CD4-positive, alpha-beta memory T cell (primary cell): ENCODE measurements at regions of chr2 and their contacts with region 1.

Region 1: DNA sequence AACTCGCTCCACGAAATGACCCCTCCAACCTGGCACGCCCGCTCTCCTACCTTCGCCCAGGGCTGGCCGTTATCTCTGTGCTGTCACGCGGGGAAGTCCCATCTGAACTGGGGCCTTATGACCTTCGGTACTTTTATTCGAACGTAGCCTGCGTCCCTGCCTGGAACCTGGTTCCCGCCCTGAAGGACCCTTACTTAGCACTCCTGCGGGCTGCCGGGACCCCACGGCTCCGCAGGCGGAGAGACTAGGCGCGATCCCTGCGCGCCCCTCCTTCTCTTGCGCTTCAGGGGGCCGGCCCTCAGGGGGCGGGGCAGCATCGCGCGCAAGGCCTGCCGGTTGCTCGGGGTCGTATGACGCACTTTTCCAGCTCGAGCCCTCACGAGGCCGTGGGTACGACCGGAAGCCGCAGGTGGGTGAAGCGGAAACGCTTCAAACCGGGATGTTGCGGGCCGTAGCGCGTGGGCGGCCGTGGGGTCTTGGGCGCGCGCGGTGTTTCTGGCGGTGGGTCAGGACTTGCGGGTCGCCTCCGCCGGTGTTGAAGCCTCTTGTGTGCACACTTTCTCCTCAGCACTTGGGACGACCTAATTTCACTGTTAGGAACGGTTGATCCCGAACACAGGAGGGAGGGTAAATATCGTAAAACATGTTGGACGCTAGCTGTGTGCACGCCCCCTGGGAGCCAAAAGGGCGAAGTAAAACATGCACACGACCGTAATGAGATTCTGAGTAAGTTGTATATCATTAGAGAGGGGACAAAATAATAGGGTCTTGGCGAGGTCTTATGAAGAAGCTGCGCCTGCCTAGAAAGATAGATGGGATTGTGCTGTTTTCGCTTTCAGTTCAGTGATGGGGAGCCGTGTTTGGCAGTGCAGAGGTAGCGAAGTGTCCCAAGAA is at the starts of genes LIPT1 and TSGA10:
- DNase-seq: peak; percentile 90 to 92 (median 91)
- H3K4me3 ChIP-seq: peak within 1 kb of the TSS; percentile 78 to 89
- H3K4me3 Mint-ChIP-seq: peak within 1 kb of the TSS in 3 of 8 donors; percentile 91 to 99 (median 96)
- H3K27ac ChIP-seq: peak within 1 kb of the TSS; percentile 97
- H3K27ac Mint-ChIP-seq: peak within 1 kb of the TSS in 1 of 7 donors; percentile 100
- H3K4me1 ChIP-seq: peaks cover 25% of the 10 kb centered on the region
- H3K4me1 Mint-ChIP-seq: peaks cover 10 to 43% (median 39%) of the 10 kb centered on the region in 4 donors
- H3K27me3 ChIP-seq: no peaks in the 10 kb centered on the region
- H3K27me3 Mint-ChIP-seq: no peaks in the 10 kb centered on the region
- total RNA-seq, gene LIPT1: 23.4 to 24.4 TPM
- total RNA-seq, gene TSGA10: 20.7 to 22.6 TPM

Region 2: GRCh38 chr2:97995734-97996624 is 1158.9 kb before region 1 on chr2 and contains the start of gene TMEM131:
- CTCF ChIA-PET with region 1: no interaction called
- POLR2A ChIA-PET with region 1: interaction called, 3 read pairs
- intact Hi-C with region 1: loop called (anchors 10 kb)
- DNase-seq: peak; percentile 93 to 97 (median 95)
- H3K4me3 ChIP-seq: peak within 1 kb of the TSS; percentile 69 to 95
- H3K4me3 Mint-ChIP-seq: peak within 1 kb of the TSS; percentile 90 to 100 (median 97)
- H3K27ac ChIP-seq: peak within 1 kb of the TSS; percentile 89
- H3K27ac Mint-ChIP-seq: peak within 1 kb of the TSS; percentile 84 to 98 (median 94)
- H3K4me1 ChIP-seq: peaks cover 37% of the 10 kb centered on the region
- H3K4me1 Mint-ChIP-seq: peaks cover 28 to 47% (median 36%) of the 10 kb centered on the region in 4 donors
- H3K27me3 ChIP-seq: no peaks in the 10 kb centered on the region
- H3K27me3 Mint-ChIP-seq: peaks cover 0 to 2% of the 10 kb centered on the region in 2 donors
- total RNA-seq, gene TMEM131: 47.5 to 47.6 TPM

Region 3: DNA sequence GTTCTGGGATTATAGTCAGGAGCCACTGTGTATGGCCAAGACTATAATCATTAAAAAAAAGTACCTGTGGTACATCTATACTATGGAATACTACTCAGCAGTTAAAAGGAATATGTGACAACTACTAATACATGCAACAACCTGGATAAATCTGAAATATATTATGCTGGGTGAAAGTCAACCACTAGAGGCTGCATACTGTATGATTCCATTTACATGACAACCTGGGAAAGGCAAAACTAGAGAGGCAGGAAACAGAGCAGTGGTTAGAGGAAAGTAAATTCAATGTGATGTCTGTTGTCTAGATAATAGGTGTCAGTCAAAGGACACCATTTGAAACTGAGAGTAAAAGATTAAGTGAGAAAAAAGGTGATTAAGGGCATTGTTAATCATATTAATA is 155.7 kb before region 1 on chr2:
- CTCF ChIA-PET with region 1: no interaction called
- POLR2A ChIA-PET with region 1: no interaction called
- intact Hi-C with region 1: no loop called
- DNase-seq: no peak
- H3K4me3 ChIP-seq: no peak overlapping the region
- H3K4me3 Mint-ChIP-seq: no peak overlapping the region
- H3K27ac ChIP-seq: no peak overlapping the region
- H3K27ac Mint-ChIP-seq: no peak overlapping the region
- H3K4me1 ChIP-seq: no peaks in the 10 kb centered on the region
- H3K4me1 Mint-ChIP-seq: no peaks in the 10 kb centered on the region
- H3K27me3 ChIP-seq: no peaks in the 10 kb centered on the region
- H3K27me3 Mint-ChIP-seq: peaks cover 0 to 3% of the 10 kb centered on the region in 2 donors

Region 4: GRCh38 chr2:99141110-99142108 is 13.5 kb before region 1 on chr2 and contains the start of gene C2orf15:
- CTCF ChIA-PET with region 1: interaction called, 20 read pairs
- POLR2A ChIA-PET with region 1: interaction called, 112 read pairs
- intact Hi-C with region 1: loop called (anchors 1 kb)
- DNase-seq: peak; percentile 97 to 98 (median 97)
- H3K4me3 ChIP-seq: peak within 1 kb of the TSS; percentile 50 to 97
- H3K4me3 Mint-ChIP-seq: peak within 1 kb of the TSS; percentile 93 to 99 (median 96)
- H3K27ac ChIP-seq: peak within 1 kb of the TSS; percentile 86
- H3K27ac Mint-ChIP-seq: peak within 1 kb of the TSS; percentile 96 to 99 (median 98)
- H3K4me1 ChIP-seq: peaks cover 18% of the 10 kb centered on the region
- H3K4me1 Mint-ChIP-seq: peaks cover 11 to 31% (median 17%) of the 10 kb centered on the region in 4 donors
- H3K27me3 ChIP-seq: no peaks in the 10 kb centered on the region
- H3K27me3 Mint-ChIP-seq: no peaks in the 10 kb centered on the region
- total RNA-seq, gene C2orf15: 2.3 to 3.2 TPM

Region 5: DNA sequence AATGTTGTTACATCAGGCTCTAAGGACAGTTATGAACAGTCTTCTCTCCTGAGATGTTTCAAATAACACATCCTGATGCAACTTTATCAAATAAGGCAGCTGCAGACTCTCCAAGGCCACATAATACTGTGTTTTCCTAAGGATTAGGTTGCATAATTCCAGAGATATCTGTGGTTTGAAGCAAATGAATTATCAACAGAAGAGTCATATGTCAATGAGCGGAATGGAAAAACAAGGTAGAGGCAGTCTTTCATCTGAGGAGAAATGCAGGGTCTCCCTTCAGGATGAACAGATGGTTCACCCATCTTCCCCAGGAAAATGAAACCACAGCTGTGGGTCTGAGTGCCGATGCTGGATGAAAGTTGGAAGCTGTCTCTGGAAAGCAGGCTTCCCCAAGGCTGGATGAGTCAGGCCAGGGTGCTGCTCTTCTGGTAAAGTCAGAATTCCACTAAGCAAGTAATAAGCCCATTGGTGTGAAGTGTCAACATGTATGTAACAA is 124.0 kb after region 1 on chr2:
- CTCF ChIA-PET with region 1: no interaction called
- POLR2A ChIA-PET with region 1: no interaction called
- intact Hi-C with region 1: no loop called
- DNase-seq: no peak
- H3K4me3 ChIP-seq: no peak overlapping the region
- H3K4me3 Mint-ChIP-seq: no peak overlapping the region
- H3K27ac ChIP-seq: no peak overlapping the region
- H3K27ac Mint-ChIP-seq: peak overlapping the region in 1 of 7 donors; percentile 41
- H3K4me1 ChIP-seq: no peaks in the 10 kb centered on the region
- H3K4me1 Mint-ChIP-seq: no peaks in the 10 kb centered on the region
- H3K27me3 ChIP-seq: no peaks in the 10 kb centered on the region
- H3K27me3 Mint-ChIP-seq: no peaks in the 10 kb centered on the region

Region 6: DNA sequence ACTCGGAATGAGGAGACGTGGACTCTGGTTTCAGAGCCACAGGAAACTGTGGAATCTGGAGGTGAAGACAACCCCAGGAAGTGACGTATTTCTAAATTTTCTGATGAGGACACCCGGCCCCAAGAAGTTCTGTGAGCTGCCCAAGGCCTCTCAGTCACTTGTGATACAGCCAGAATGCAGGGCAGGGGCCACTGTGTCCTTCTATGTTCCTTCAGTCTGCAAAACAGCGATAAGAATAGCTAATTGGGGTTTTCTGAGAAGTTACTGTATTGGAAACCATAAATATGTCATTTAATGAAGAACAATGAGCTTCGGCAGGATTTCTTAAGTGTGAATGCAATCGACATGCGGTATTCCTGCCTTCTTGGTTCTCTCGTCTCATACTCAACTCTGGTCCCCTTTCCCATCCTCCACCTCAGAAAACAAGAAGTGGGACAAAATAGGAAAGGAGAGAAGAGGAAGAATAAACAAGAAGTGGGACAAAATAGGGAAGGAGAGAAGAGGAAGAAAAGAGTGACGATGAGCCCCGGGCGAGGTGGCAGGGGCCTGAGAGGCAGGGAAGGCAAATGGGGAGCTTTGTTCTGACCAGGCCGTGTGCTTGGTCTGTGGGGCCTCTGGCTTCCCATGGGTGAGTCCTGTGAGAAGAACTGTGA is 616.9 kb after region 1 on chr2:
- CTCF ChIA-PET with region 1: no interaction called
- POLR2A ChIA-PET with region 1: no interaction called
- intact Hi-C with region 1: no loop called
- DNase-seq: no peak
- H3K4me3 ChIP-seq: no peak overlapping the region
- H3K4me3 Mint-ChIP-seq: no peak overlapping the region
- H3K27ac ChIP-seq: no peak overlapping the region
- H3K27ac Mint-ChIP-seq: no peak overlapping the region
- H3K4me1 ChIP-seq: no peaks in the 10 kb centered on the region
- H3K4me1 Mint-ChIP-seq: no peaks in the 10 kb centered on the region
- H3K27me3 ChIP-seq: no peaks in the 10 kb centered on the region
- H3K27me3 Mint-ChIP-seq: peaks cover 2% of the 10 kb centered on the region in 2 donors